Left ventricle myocardium superior (tissue), 1 donor: ENCODE measurements at regions of chr1 and their contacts with region 1.

Region 1: GRCh38 chr1:89762779-89763648 is 57.8 kb upstream of the LRRC8D start:
- DNase-seq: peak; percentile 93
- ATAC-seq: peak; percentile 99

Region 2: DNA sequence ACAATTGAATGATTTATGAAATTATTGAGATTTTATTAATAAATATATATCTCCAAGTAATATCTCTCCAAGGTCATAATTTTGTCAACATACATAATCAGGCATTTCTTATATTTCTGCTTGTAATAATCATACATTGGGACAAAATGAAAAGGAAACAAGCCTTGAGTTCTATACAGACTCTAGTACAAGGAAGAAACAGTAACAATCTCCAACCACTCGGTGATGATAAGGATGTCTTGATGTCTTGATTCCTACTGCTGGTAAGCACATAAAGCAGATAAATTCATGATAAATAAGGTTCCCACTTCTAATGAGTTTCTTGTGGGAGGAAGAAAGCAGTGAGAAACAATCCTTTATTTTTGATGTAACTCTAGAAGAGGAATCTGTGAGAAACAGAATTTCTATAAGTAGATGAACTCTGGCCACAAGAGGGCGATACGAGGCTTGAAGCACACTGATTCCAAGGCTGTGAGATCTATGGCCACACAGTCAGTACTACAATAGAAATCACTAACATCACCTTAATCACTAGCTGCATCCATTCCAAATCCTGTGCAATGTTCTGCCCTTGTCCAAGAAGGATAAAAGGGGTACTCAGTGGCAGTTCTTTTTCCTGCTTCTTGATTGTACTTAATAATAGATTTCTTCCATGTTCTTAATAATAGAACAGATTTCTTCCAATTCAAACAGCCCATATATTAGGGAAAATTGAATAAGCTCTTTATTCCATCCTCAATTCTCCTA is 279.8 kb before region 1 on chr1:
- intact Hi-C with region 1: loop called (anchors 2 kb)
- DNase-seq: peak; percentile 60
- ATAC-seq: peak; percentile 75

Region 3: DNA sequence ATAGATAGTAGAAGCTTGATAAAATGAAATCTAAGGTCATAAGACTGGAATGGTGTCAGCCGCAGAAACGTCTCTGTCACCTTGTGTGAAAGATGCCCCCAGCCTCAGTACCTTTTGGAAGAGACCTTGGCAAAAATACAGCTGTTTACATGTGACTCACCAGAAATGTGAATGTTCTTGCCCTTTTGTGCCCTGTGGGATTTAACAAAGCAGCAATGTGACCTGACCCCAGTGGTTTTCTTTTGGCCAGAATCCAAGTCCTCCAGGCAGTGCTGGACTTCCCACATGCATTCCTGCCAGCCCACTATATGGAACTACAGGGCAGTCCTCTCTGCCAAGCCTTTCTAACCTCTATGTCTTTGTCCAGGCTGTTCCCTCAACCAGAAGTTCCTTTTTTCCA is 157.3 kb before region 1 on chr1:
- intact Hi-C with region 1: loop called (anchors 10 kb)
- DNase-seq: no peak
- ATAC-seq: no peak

Region 4: DNA sequence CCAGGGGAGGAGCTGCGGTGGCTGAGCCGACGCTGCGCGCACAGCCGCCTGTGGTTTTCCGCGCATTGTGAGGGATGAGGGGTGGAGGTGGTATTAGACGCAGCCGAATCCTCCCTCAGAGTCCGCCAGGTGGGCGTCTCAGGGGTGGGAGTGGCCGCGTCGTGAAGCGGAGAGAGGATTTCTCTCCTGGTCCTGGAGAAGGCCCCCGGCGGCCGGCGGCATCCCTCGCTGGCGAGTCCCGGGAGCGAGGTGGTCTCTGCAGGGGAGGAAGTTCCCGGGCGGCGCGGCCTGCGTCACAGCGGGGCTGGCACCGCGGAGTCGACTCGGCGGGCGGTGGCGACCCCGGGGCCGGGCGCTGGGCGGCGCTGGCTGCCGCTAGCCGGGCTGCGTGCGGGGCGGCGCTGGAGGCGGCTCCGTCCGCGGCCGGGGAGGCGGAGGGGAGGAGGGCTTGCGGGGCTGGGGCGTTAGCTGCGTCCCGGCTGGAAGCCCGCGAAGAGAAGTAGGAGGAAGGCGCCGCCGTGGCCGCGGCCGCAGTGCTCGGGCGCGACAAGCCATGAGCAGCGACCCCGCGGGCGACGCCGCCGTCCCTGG is 130.3 kb before region 1 on chr1 and contains the start of gene LRRC8C:
- intact Hi-C with region 1: loop called (anchors 2 kb)
- DNase-seq: peak; percentile 93
- ATAC-seq: peak; percentile 96
- total RNA-seq, gene LRRC8C: 6.8 TPM

Region 5: DNA sequence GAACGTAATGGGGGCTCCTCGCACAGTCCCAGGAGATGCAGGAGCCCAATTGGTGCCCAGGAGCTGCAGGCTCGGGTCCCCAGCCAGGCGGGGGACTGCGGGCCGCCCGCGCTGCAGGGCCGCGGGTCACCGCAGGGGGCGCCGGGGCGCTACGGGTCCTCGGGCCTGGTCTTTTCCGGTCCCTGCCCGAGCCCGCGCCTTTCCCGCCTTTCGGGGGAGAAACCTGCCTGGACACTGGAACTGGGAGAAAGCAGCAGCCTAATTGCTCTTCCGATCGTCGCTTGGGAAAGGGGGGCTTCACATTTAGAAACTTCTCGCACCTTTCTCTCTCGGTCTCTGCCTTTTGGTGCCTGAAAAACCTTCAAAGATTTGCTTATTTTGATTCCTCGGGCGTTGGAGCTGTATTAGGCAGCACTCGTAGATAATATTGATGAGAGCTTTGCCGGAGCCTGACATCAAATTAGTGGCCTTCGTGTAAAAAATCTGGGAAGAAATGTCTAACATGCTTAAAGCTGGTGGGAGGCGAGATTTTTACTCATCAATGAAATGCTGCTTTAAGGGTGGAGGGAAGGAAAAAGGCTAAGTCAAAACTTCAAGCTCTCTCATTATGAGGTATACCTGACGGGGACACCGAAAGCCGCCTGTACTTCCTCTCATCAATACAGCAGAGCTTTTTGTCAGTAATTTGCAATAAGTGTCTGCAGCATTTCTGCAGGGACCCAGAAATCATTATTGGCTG is 966.7 kb after region 1 on chr1:
- intact Hi-C with region 1: no loop called
- DNase-seq: no peak
- ATAC-seq: no peak